ENCODE measurements at regions of chr3 and their contacts with region 1.

Region 1: DNA sequence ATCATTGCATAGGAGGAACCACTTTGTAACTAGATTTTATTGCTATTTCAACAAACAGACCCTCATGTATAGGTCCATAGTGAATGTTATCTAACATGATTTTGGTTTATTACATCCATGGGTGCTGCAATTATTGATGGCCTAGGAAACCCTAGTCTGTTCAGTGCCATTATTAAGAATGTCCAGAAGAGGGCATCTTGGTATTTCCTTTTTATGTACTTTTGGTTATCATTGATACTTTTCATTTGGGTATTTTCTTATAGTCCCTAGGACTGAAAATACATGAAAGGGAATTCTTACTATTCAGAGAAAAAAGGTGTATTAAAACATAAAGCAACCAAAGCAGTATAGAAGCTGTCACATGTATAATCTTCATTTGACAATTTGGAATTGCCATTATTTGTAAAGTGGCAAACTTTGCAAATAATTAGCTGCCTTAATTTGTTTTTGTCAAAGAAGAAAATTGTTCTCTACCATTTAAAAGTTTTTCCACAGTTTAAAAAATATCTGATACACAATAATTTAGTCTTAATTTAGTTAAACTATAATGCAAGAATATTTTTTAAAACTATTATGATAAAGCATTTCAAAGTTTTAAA is 48.7 kb downstream of the CNOT10 start:
- DNase-seq: peak; percentile 19
- ATAC-seq: peak; percentile 72
- H3K4me3 ChIP-seq: no peak overlapping the region
- H3K27ac ChIP-seq: no peak overlapping the region
- H3K4me1 ChIP-seq: no peaks in the 10 kb centered on the region
- H3K27me3 ChIP-seq: no peaks in the 10 kb centered on the region
- CTCF ChIP-seq: peak; percentile 43 to 75 (median 72); a peak in 4 of 6 replicates
- POLR2A ChIP-seq: no peak
- RAD21 ChIP-seq: peak; percentile 73

Region 2: GRCh38 chr3:32510075-32510724 is 223.5 kb before region 1 on chr3:
- CTCF ChIA-PET with region 1: no interaction called
- POLR2A ChIA-PET with region 1: no interaction called
- RAD21 ChIA-PET with region 1: no interaction called
- intact Hi-C with region 1: loop called (anchors 2 kb)
- DNase-seq: peak; percentile 39
- ATAC-seq: peak; percentile 97
- H3K4me3 ChIP-seq: no peak overlapping the region
- H3K27ac ChIP-seq: no peak overlapping the region
- H3K4me1 ChIP-seq: no peaks in the 10 kb centered on the region
- H3K27me3 ChIP-seq: no peaks in the 10 kb centered on the region
- CTCF ChIP-seq: peak; percentile 67 to 87 (median 86)
- POLR2A ChIP-seq: no peak
- RAD21 ChIP-seq: peak; percentile 97

Region 3: DNA sequence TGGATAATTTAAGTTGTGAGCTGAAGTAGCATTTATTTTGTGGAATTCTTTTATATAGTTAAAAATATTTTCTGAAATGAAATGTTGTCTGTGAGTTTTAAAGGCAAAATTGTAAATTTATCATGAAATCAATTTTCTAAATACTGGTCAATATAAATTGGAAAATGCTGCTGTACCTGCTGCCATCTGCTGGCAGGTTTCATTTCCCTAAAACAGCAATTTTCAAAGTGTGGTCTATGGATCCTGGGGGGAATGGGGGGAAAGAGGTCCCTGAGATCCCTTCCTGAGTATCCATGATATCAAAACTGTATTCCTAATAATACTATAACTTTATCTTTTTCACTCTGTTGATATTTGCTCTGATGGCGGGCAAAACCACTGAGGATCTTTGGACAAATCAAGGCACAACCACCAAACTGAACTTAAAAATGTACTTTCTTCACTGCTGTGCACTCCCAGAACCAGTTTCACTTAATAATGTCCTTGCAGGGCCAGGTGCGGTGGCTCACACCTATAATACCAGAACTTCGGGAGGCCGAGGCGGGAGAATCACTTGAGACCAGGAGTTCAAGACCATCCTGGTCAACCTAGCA is 200.5 kb after region 1 on chr3:
- CTCF ChIA-PET with region 1: interaction called, 4 read pairs
- POLR2A ChIA-PET with region 1: no interaction called
- RAD21 ChIA-PET with region 1: no interaction called
- intact Hi-C with region 1: loop called (anchors 1 kb)
- DNase-seq: peak; percentile 12
- ATAC-seq: peak; percentile 50; the same call in 1 of the 2 replicates
- H3K4me3 ChIP-seq: no peak overlapping the region
- H3K27ac ChIP-seq: no peak overlapping the region
- H3K4me1 ChIP-seq: no peaks in the 10 kb centered on the region
- H3K27me3 ChIP-seq: no peaks in the 10 kb centered on the region
- CTCF ChIP-seq: peak; percentile 67 to 77 (median 72)
- POLR2A ChIP-seq: no peak
- RAD21 ChIP-seq: peak; percentile 82

Region 4: DNA sequence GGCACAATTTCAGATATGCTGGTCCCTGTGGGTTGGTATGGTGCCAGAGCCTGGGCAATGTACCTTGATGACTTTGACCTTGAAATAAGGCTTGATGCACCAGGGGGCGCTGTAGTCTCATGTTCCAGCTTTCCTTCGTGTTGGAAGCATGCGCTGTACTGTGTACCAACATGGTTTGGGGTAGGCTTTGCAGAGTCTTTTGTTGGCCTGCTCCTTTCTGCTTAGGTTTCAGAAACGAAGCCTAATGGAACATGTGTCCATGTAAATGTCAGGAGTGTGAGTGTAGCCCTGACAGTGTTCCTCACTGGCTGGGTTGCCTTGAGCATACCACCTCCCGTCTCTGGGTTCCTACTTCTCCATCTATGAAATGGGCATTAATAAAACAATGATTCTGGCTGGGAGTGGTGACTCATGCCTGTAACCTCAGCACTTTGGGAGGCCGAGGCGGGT is 214.1 kb after region 1 on chr3:
- CTCF ChIA-PET with region 1: no interaction called
- POLR2A ChIA-PET with region 1: no interaction called
- RAD21 ChIA-PET with region 1: no interaction called
- intact Hi-C with region 1: no loop called
- DNase-seq: peak; percentile 88
- ATAC-seq: peak; percentile 97
- H3K4me3 ChIP-seq: no peak overlapping the region
- H3K27ac ChIP-seq: no peak overlapping the region
- H3K4me1 ChIP-seq: peaks cover 0 to 14% of the 10 kb centered on the region in 2 experiments; a peak in 2 of 4 replicates
- H3K27me3 ChIP-seq: no peaks in the 10 kb centered on the region
- CTCF ChIP-seq: peak; percentile 79 to 88 (median 83)
- POLR2A ChIP-seq: no peak
- RAD21 ChIP-seq: peak; percentile 96

Region 5: GRCh38 chr3:33074217-33075067 is 340.7 kb after region 1 on chr3:
- CTCF ChIA-PET with region 1: interaction called, 5 read pairs
- POLR2A ChIA-PET with region 1: no interaction called
- RAD21 ChIA-PET with region 1: no interaction called
- intact Hi-C with region 1: loop called (anchors 10 kb)
- DNase-seq: peak; percentile 48
- ATAC-seq: peak; percentile 98
- H3K4me3 ChIP-seq: no peak overlapping the region
- H3K27ac ChIP-seq: no peak overlapping the region
- H3K4me1 ChIP-seq: no peaks in the 10 kb centered on the region
- H3K27me3 ChIP-seq: no peaks in the 10 kb centered on the region
- CTCF ChIP-seq: peak; percentile 66 to 96 (median 95); a peak in 5 of 6 replicates
- POLR2A ChIP-seq: no peak
- RAD21 ChIP-seq: peak; percentile 77